ENCODE measurements at regions of chr9 and their contacts with region 1.

Region 1: DNA sequence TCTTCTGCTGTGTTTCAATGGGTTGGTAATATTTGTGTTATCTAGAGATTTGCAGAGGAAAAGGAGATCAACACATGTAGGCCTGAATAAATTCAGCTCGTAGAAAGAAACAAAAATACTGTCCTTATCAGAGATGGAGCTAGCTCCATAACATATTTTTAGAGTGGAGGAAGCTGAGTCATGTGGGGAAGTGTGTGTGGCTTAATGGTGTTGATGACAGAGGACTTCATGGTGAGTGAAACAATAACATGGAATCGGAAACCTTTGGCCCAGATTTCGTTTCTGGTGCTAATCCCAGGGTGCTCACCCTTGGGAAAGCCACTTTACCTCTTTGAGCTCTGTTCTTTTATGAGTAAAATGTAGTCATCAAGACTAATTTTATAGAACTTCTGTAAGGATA is 825.0 kb downstream of the TLR4 start:
- DNase-seq: peak; percentile 98
- H3K4me3 ChIP-seq: no peak overlapping the region
- H3K27ac ChIP-seq: peak overlapping the region; percentile 95
- H3K4me1 ChIP-seq: peaks cover 40% of the 10 kb centered on the region
- H3K27me3 ChIP-seq: no peaks in the 10 kb centered on the region
- CTCF ChIP-seq: no peak
- POLR2A ChIP-seq: no peak

Region 2: GRCh38 chr9:117782931-117783788 is 746.0 kb before region 1 on chr9:
- CTCF ChIA-PET with region 1: no interaction called
- POLR2A ChIA-PET with region 1: no interaction called
- dilution Hi-C with region 1: no loop called
- intact Hi-C with region 1: loop called (anchors 2 kb)
- DNase-seq: peak; percentile 83
- H3K4me3 ChIP-seq: peak overlapping the region; percentile 39 to 77 (median 52)
- H3K27ac ChIP-seq: no peak overlapping the region
- H3K4me1 ChIP-seq: peaks cover 7% of the 10 kb centered on the region
- H3K27me3 ChIP-seq: no peaks in the 10 kb centered on the region
- CTCF ChIP-seq: peak; percentile 80
- POLR2A ChIP-seq: no peak

Region 3: GRCh38 chr9:118038713-118039112 is 490.5 kb before region 1 on chr9:
- CTCF ChIA-PET with region 1: no interaction called
- POLR2A ChIA-PET with region 1: no interaction called
- dilution Hi-C with region 1: no loop called
- intact Hi-C with region 1: no loop called
- DNase-seq: no peak
- H3K4me3 ChIP-seq: no peak overlapping the region
- H3K27ac ChIP-seq: no peak overlapping the region
- H3K4me1 ChIP-seq: no peaks in the 10 kb centered on the region
- H3K27me3 ChIP-seq: no peaks in the 10 kb centered on the region
- CTCF ChIP-seq: no peak
- POLR2A ChIP-seq: no peak

Region 4: DNA sequence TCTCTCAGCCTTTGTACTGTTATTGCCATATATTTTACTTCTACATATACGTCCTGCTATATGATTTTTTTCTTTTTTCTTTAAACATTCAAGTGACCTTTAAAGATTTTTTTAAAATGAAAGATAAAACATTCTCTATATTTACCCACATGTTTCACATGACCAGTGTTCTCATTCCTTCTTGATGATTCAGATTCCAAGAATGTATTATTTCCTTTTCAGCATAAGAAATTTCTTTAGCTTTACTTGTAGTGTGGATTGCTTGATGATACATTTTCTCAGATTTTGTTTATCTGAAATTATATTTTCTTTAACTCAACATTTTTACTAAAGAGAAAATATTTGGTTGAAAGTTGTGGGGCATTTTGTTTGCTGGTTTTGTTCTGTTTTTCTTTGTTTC is 47.9 kb after region 1 on chr9:
- CTCF ChIA-PET with region 1: interaction called, 3 read pairs
- POLR2A ChIA-PET with region 1: no interaction called
- dilution Hi-C with region 1: no loop called
- intact Hi-C with region 1: loop called (anchors 1 kb)
- DNase-seq: peak; percentile 77
- H3K4me3 ChIP-seq: no peak overlapping the region
- H3K27ac ChIP-seq: peak overlapping the region; percentile 87
- H3K4me1 ChIP-seq: peaks cover 17% of the 10 kb centered on the region
- H3K27me3 ChIP-seq: no peaks in the 10 kb centered on the region
- CTCF ChIP-seq: no peak
- POLR2A ChIP-seq: no peak

Region 5: DNA sequence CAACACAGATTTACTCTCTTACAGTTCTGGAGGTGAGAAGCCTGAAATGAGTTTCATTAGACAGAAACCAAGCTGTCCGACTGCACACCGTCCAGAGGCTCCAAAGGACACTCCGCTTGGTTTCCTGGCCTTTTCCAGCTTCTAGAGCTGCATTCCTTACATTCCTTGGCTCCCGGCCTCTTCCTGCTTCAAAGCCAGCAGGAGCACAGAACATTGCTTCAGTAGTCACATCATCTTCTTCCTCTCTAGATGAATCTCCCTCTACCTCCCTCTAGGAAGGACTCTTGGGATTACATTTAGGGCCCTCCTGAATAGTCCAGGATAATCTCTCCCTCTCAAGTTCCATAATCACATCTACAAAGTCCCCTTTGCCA is 1837.4 kb after region 1 on chr9:
- CTCF ChIA-PET with region 1: no interaction called
- POLR2A ChIA-PET with region 1: no interaction called
- dilution Hi-C with region 1: no loop called
- intact Hi-C with region 1: loop called (anchors 2 kb)
- DNase-seq: peak; percentile 83
- H3K4me3 ChIP-seq: no peak overlapping the region
- H3K27ac ChIP-seq: peak overlapping the region; percentile 78
- H3K4me1 ChIP-seq: peaks cover 12% of the 10 kb centered on the region
- H3K27me3 ChIP-seq: peaks cover 0 to 3% of the 10 kb centered on the region in 2 experiments
- CTCF ChIP-seq: peak; percentile 46 to 60
- POLR2A ChIP-seq: peak; percentile 32